GM18951 (cell line): ENCODE measurements at regions of chr3 and their contacts with region 1.

Region 1: GRCh38 chr3:150721285-150722130 is 17.8 kb upstream of the ERICH6 start:
- POLR2A ChIP-seq: no peak

Region 2: GRCh38 chr3:150603153-150603979 is 118.1 kb before region 1 on chr3 and contains the start of gene SELENOT:
- in situ Hi-C with region 1: no loop called
- POLR2A ChIP-seq: peak; percentile 99

Region 3: DNA sequence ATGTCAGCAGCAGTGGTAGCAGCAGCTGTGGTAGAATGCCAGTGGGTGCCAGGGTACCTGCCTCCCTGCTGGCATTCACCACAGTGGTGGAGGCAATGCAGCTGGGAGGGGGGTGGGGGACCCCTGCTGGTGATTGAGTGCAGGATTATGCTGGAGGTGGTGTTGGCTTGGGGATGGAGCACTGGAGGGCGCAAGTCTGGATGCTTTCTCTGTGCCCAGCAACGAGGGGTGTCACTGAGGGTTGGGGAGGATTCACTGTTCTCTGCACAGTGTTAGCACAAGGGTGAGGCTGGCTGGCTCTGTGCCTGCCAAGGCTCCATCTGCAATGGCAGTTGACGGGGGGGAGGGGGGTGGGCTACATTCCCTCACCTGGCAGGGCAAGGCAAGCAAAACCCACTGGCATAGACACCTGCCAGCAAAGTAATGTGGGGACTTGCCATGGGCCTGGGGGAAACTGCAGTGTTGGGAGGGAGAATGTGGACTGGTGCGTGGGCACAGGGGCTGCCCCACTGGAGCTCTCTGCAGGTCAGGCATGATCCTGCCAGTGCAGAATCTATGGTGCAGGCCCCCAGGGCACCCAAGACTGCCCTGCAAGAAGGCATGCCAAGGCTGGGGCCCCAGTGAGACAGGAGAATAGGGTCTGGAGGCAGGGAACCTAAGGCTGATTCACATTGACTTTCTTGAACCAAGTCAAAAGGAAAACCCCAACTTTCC is 119.5 kb after region 1 on chr3:
- in situ Hi-C with region 1: loop called (anchors 10 kb)
- POLR2A ChIP-seq: no peak

Region 4: GRCh38 chr3:150868282-150868681 is 146.8 kb after region 1 on chr3:
- in situ Hi-C with region 1: loop called (anchors 5 kb)
- POLR2A ChIP-seq: no peak

Region 5: DNA sequence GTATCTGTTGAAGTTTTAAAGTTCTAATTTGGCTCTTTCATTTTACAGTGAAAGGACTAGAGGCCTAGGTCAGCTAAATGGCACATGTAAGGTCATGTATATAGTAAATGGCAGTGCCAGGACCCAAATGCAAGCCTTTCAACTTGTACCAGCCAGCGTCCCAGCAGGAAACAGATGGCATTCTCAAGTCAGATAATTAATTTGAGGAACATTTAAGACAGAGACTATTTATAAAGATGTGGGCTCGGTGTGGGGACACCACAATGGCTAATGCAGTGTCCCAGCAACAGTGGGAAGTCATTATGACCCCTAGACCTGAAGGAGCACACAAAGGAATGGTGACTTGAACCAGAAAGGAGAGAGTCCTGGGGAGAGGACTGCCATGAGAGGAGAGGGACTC is 177.6 kb after region 1 on chr3:
- in situ Hi-C with region 1: no loop called
- POLR2A ChIP-seq: no peak

Region 6: DNA sequence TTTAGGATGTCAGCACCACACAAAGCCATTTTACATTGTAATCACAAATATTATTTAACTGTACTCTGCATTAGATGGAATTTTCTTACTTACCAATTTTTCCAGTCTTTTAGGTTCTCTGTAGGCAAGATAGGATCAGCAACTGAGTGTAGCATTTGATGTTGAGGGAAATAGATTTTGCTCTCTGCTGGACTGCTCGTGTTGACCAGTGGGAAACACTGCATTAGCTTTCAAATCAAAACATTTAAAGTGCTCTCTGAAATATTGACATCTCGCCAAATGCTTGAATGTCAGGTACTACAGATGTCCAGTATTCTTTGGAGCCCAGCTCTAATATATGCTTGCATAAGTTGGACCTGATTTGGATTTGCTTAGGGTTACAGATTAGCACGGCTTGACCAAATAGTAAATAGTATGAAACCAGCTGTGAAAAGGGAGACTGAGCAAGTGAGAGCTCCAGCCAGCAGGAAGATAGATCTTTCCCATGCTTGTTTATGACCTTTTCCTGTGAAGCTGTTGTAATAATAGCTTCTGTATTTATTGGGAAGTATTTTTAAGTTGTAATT is 527.3 kb after region 1 on chr3:
- in situ Hi-C with region 1: no loop called
- POLR2A ChIP-seq: no peak